ENCODE measurements at regions of chr9 and their contacts with region 1.

Region 1: DNA sequence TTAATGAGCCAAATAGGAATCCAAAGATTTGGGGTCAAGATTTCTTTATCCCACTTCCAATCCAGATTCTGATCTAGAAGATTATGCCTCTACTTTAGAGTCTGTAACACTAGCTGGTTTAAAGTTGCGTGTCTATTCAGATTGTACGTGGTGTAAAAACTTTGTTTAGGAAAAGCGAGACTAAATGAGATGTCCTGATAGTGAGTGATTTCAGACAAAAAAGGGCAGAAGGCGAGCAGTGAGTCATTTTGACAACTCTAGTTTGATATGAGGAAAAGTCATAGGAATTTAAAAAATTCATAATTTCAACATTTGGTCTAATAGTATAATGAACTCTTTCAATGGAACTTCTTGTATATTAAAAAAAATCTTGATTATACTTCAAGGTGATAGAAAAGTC is 119.6 kb upstream of the KLF9 start:
- DNase-seq: no peak
- H3K4me3 ChIP-seq: no peak overlapping the region
- H3K4me3 Mint-ChIP-seq: no peak overlapping the region
- H3K27ac ChIP-seq: no peak overlapping the region
- H3K27ac Mint-ChIP-seq: no peak overlapping the region
- H3K4me1 ChIP-seq: no peaks in the 10 kb centered on the region
- H3K4me1 Mint-ChIP-seq: no peaks in the 10 kb centered on the region
- H3K27me3 ChIP-seq: no peaks in the 10 kb centered on the region
- H3K27me3 Mint-ChIP-seq: peaks cover 0 to 1% (median 0%) of the 10 kb centered on the region in 3 donors
- CTCF ChIP-seq: no peak

Region 2: GRCh38 chr9:70587201-70587600 is 53.1 kb after region 1 on chr9:
- intact Hi-C with region 1: loop called in 1 of 2 experiments (anchors 10 kb)
- DNase-seq: no peak
- H3K4me3 ChIP-seq: no peak overlapping the region
- H3K4me3 Mint-ChIP-seq: no peak overlapping the region
- H3K27ac ChIP-seq: no peak overlapping the region
- H3K27ac Mint-ChIP-seq: no peak overlapping the region
- H3K4me1 ChIP-seq: no peaks in the 10 kb centered on the region
- H3K4me1 Mint-ChIP-seq: no peaks in the 10 kb centered on the region
- H3K27me3 ChIP-seq: no peaks in the 10 kb centered on the region
- H3K27me3 Mint-ChIP-seq: no peaks in the 10 kb centered on the region
- CTCF ChIP-seq: no peak

Region 3: GRCh38 chr9:70609542-70610286 is 75.7 kb after region 1 on chr9:
- intact Hi-C with region 1: no loop called
- DNase-seq: no peak
- H3K4me3 ChIP-seq: no peak overlapping the region
- H3K4me3 Mint-ChIP-seq: no peak overlapping the region
- H3K27ac ChIP-seq: no peak overlapping the region
- H3K27ac Mint-ChIP-seq: no peak overlapping the region
- H3K4me1 ChIP-seq: peaks cover 12 to 15% of the 10 kb centered on the region in 2 donors
- H3K4me1 Mint-ChIP-seq: peaks cover 16% of the 10 kb centered on the region
- H3K27me3 ChIP-seq: no peaks in the 10 kb centered on the region
- H3K27me3 Mint-ChIP-seq: peaks cover 0 to 3% (median 2%) of the 10 kb centered on the region in 3 donors
- CTCF ChIP-seq: no peak